Mammary epithelial cell (primary cell): ENCODE measurements at regions of chr2 and their contacts with region 1.

Region 1: GRCh38 chr2:156589381-156590079 is 153.4 kb downstream of the GPD2 start:
- DNase-seq: peak; percentile 25
- H3K4me3 ChIP-seq: no peak overlapping the region
- H3K27ac ChIP-seq: no peak overlapping the region
- H3K4me1 ChIP-seq: no peaks in the 10 kb centered on the region
- H3K27me3 ChIP-seq: no peaks in the 10 kb centered on the region
- CTCF ChIP-seq: peak; percentile 27 to 48

Region 2: DNA sequence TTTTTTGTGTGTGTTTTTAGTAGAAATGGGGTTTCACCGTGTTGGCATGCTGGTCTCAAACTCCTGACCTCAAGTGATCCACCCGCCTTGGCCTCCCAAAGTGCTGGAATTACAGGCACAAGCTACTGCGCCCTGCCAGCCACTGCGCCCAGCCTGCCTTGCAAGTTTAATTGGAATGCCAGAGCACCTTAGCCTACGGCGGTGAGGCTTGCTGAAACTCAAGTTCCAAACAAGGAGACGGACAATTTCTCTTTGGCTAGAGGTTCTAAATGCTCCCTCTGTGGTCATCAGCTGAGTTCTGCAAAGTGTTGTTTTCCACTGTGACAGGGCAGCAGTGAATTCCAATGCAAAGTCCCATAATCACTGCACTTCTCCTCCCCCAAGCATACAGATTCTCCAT is 1307.6 kb before region 1 on chr2:
- CTCF ChIA-PET with region 1: no interaction called
- dilution Hi-C with region 1: no loop called
- in situ Hi-C with region 1: no loop called
- intact Hi-C with region 1: no loop called
- DNase-seq: no peak
- H3K4me3 ChIP-seq: no peak overlapping the region
- H3K27ac ChIP-seq: no peak overlapping the region
- H3K4me1 ChIP-seq: no peaks in the 10 kb centered on the region
- H3K27me3 ChIP-seq: peaks cover under 1% of the 10 kb centered on the region
- CTCF ChIP-seq: no peak

Region 3: DNA sequence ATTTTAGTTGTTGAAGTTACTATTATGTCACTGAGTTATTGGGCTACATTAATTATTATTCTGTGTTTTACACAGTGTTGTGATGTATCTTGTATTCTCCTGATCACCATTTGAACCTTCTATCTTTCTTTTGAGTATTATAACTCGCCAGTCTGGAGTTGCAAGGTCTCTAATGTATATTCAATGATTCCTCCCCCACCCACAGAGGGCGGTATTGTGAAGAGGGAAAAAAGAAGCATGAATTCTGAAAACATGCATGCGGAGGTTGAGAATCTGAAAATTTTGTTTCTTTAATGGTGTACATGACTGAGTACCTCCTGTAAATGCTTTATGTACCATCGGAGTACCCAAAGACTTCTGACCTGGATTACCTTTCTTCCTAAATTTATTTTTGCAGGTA is 523.6 kb before region 1 on chr2:
- CTCF ChIA-PET with region 1: no interaction called
- dilution Hi-C with region 1: no loop called
- in situ Hi-C with region 1: loop called in 1 of 2 experiments (anchors 25 kb)
- intact Hi-C with region 1: loop called (anchors 1 kb)
- DNase-seq: no peak
- H3K4me3 ChIP-seq: no peak overlapping the region
- H3K27ac ChIP-seq: no peak overlapping the region
- H3K4me1 ChIP-seq: peaks cover 8% of the 10 kb centered on the region
- H3K27me3 ChIP-seq: no peaks in the 10 kb centered on the region
- CTCF ChIP-seq: peak; percentile 47 to 64

Region 4: GRCh38 chr2:156332534-156333273 is 256.8 kb before region 1 on chr2 and contains the start of gene NR4A2:
- CTCF ChIA-PET with region 1: interaction called, 18 read pairs
- dilution Hi-C with region 1: no loop called
- in situ Hi-C with region 1: no loop called
- intact Hi-C with region 1: loop called (anchors 1 kb)
- DNase-seq: peak; percentile 92
- H3K4me3 ChIP-seq: peak within 1 kb of the TSS; percentile 66 to 86 (median 80)
- H3K27ac ChIP-seq: peak within 1 kb of the TSS; percentile 95
- H3K4me1 ChIP-seq: peaks cover 23% of the 10 kb centered on the region
- H3K27me3 ChIP-seq: no peaks in the 10 kb centered on the region
- CTCF ChIP-seq: no peak
- total RNA-seq, gene NR4A2: 0.50 to 1.3 TPM

Region 5: DNA sequence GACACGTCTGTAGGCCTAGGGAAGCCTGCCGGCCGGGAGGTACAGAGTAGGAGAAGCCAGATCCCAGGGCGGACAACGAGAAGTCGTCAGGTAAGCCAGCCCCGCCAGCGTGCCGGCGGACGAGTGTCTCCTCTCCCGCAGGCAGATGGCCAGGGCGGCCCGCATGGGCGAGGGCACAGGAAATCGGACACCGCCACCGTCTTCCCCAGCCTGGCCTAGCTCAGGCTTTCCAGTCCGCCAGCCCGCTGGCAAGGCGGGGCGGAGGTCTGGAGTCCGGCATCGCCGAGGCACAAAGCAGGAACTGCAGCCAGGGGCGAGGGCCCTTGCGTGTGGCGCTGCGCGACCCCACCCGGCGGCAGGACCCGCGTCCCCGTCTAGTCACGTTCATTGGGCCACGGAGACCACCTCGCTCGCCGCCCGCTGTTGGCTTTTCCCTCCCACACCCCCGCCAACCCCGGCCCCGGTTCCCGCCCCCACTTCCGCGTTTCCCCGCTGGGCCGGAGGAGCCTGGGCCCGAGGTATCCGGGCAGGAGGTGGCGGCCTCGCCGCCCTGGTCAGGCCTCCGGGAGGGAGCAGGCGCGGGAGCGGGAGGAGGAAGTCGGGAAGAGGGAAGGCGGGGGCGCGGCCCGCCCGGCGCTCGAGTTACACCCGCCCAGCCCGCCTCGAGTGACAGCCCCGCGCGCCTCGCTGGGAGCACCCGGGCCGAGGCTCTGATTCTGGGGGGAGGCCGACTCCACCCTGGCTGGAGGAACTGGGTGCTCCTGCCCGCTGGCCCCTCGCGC is 153.6 kb before region 1 on chr2 and contains the start of gene GPD2:
- CTCF ChIA-PET with region 1: no interaction called
- dilution Hi-C with region 1: no loop called
- in situ Hi-C with region 1: no loop called
- intact Hi-C with region 1: loop called (anchors 5 kb)
- DNase-seq: peak; percentile 61
- H3K4me3 ChIP-seq: peak within 1 kb of the TSS; percentile 63 to 85 (median 65)
- H3K27ac ChIP-seq: peak within 1 kb of the TSS; percentile 90
- H3K4me1 ChIP-seq: peaks cover 39% of the 10 kb centered on the region
- H3K27me3 ChIP-seq: no peaks in the 10 kb centered on the region
- CTCF ChIP-seq: no peak
- total RNA-seq, gene GPD2: 30.0 to 39.3 TPM

Region 6: DNA sequence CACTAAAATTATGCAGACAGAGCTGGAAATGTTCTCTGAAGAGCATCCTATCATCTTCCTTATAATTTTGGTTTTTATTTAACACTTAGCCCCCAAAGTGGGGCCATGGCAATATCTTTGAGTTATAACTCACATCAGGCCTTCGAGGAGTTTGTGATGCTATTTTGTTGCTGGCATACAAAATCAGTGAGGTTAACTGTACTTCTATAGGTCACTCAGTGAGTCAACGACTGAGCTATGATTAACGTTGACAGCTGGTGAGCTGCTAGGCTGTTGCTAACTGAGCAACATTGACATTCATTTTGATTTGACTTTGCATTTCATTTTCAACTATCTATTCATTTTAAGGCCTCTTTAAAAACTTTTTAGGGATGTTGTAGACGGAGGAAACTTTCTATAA is 103.4 kb before region 1 on chr2:
- CTCF ChIA-PET with region 1: no interaction called
- dilution Hi-C with region 1: no loop called
- in situ Hi-C with region 1: no loop called
- intact Hi-C with region 1: no loop called
- DNase-seq: peak; percentile 13
- H3K4me3 ChIP-seq: no peak overlapping the region
- H3K27ac ChIP-seq: no peak overlapping the region
- H3K4me1 ChIP-seq: no peaks in the 10 kb centered on the region
- H3K27me3 ChIP-seq: no peaks in the 10 kb centered on the region
- CTCF ChIP-seq: no peak

Region 7: DNA sequence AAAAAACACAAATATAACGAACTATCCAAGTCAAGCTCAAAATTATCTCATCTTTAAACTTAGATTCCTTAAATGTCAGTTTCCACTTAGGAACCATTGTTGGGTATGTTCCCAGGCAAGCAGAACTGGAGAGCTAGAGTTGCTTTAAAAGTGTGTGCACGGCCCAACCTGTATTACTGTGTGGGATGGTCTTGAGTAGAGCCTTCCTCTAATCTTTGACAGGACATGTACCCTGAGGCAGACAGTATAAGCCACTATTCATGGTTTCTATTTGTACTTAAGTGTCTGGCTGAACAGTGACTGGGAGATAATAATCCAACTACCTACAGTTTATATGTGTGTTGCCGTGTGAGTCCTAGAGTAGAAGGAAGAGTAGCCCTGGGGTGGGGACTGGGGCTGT is 86.4 kb after region 1 on chr2:
- CTCF ChIA-PET with region 1: no interaction called
- dilution Hi-C with region 1: no loop called
- in situ Hi-C with region 1: no loop called
- intact Hi-C with region 1: no loop called
- DNase-seq: no peak
- H3K4me3 ChIP-seq: no peak overlapping the region
- H3K27ac ChIP-seq: no peak overlapping the region
- H3K4me1 ChIP-seq: no peaks in the 10 kb centered on the region
- H3K27me3 ChIP-seq: no peaks in the 10 kb centered on the region
- CTCF ChIP-seq: no peak

Region 8: DNA sequence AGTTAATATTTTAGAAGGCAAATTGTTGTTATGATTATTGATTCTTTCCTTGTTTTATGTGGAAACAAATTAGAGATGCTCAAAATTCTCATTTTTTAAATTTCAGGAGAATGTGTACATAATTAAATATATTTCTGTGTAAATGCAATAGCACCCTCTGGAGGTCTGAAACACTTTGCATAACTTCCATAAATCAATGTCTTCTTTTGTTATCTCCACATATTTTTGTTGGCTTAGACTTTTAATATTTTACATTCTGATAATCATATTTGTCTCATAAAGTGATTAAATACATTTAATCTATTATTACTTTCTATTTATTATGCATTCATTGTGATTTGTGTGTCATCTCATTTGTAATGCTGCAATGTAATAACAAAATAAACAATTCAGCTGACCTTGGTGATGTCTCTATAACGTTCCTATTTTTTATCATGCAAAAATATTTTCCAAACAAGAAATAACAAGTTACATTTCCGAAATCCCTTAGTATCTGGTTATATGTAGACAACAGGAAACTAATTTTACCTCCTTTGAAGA is 466.2 kb after region 1 on chr2:
- CTCF ChIA-PET with region 1: no interaction called
- dilution Hi-C with region 1: no loop called
- in situ Hi-C with region 1: no loop called
- intact Hi-C with region 1: loop called (anchors 5 kb)
- DNase-seq: peak; percentile 25
- H3K4me3 ChIP-seq: no peak overlapping the region
- H3K27ac ChIP-seq: no peak overlapping the region
- H3K4me1 ChIP-seq: peaks cover 16% of the 10 kb centered on the region
- H3K27me3 ChIP-seq: peaks cover 3% of the 10 kb centered on the region
- CTCF ChIP-seq: peak; percentile 56 to 58

Region 9: DNA sequence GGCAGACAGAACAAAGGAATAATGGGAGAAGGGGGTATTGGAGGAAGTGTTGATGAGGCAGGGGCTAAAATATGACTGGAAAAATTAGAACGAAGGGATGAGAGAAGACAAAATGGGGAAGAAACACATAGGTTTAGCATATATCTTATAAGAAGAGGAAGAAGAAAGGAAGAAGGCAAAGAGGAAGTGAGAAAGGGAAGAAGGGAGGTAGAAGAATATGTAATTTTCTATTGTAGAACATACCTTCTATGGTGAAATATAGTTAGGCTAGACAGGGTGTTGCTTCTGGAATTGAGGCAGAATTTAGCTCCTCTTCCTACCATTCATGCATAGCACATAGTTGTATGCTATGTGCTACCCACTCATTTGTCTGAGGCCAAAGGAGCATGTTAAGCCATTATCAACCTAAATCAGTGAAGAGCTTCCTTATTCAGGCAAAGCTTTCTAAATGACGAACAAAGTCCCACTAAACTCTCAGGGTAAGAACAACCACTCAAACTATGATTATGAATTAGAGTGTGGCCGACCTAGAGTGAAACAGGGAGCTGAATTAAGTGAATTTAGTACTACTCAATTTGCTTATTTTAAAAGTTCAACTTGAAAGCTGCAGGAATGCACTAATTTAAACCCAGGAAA is 487.1 kb after region 1 on chr2:
- CTCF ChIA-PET with region 1: no interaction called
- dilution Hi-C with region 1: no loop called
- in situ Hi-C with region 1: no loop called
- intact Hi-C with region 1: no loop called
- DNase-seq: no peak
- H3K4me3 ChIP-seq: no peak overlapping the region
- H3K27ac ChIP-seq: no peak overlapping the region
- H3K4me1 ChIP-seq: no peaks in the 10 kb centered on the region
- H3K27me3 ChIP-seq: peaks cover 4% of the 10 kb centered on the region
- CTCF ChIP-seq: no peak